ENCODE measurements at regions of chr18 and their contacts with region 1.

Region 1: GRCh38 chr18:7497081-7497480 is 70.0 kb upstream of the PTPRM start:
- DNase-seq: no peak
- H3K27ac ChIP-seq: no peak overlapping the region
- CTCF ChIP-seq: no peak

Region 2: GRCh38 chr18:7256618-7257425 is 240.3 kb before region 1 on chr18:
- CTCF ChIA-PET with region 1: no interaction called
- POLR2A ChIA-PET with region 1: no interaction called
- DNase-seq: no peak
- H3K27ac ChIP-seq: no peak overlapping the region
- CTCF ChIP-seq: no peak

Region 3: DNA sequence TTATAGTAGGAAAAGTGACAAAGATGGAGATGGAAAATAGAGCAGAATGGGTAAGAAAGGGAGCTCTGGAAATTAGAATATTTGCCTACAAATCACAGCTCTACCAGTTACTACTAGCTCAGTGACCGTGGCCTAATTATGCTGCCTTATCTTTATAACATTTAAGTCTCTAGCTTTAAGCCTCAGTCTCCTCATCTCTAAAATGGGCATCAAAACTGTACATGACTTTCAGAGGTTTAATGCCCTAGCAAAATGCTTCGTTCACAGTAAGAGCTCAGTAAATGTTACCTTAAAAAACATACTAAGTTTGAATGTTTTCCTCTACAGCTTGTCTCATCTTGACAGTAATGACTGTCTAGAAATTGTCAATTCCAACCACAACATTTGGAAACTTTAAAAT is 61.7 kb after region 1 on chr18:
- CTCF ChIA-PET with region 1: interaction called, 3 read pairs
- POLR2A ChIA-PET with region 1: interaction called, 14 read pairs
- DNase-seq: no peak
- H3K27ac ChIP-seq: no peak overlapping the region
- CTCF ChIP-seq: no peak

Measured in RWPE1 (cell line).